ENCODE measurements at regions of chr15 and their contacts with region 1.

Region 1: GRCh38 chr15:42650208-42651066 is 75.0 kb downstream of the STARD9 start:
- DNase-seq: peak; percentile 28 to 71 (median 40)
- ATAC-seq: peak; percentile 84
- H3K4me3 ChIP-seq: no peak overlapping the region
- H3K4me3 Mint-ChIP-seq: no peak overlapping the region
- H3K27ac ChIP-seq: no peak overlapping the region
- H3K27ac Mint-ChIP-seq: no peak overlapping the region
- H3K4me1 ChIP-seq: no peaks in the 10 kb centered on the region
- H3K4me1 Mint-ChIP-seq: no peaks in the 10 kb centered on the region
- H3K27me3 ChIP-seq: no peaks in the 10 kb centered on the region
- H3K27me3 Mint-ChIP-seq: no peaks in the 10 kb centered on the region
- CTCF ChIP-seq: peak; percentile 74

Region 2: GRCh38 chr15:42385206-42385979 is 265.0 kb before region 1 on chr15:
- CTCF ChIA-PET with region 1: no interaction called
- POLR2A ChIA-PET with region 1: no interaction called
- intact Hi-C with region 1: no loop called
- DNase-seq: peak in 2 of 14 experiments; percentile 11 to 19
- ATAC-seq: no peak
- H3K4me3 ChIP-seq: no peak overlapping the region
- H3K4me3 Mint-ChIP-seq: no peak overlapping the region
- H3K27ac ChIP-seq: no peak overlapping the region
- H3K27ac Mint-ChIP-seq: no peak overlapping the region
- H3K4me1 ChIP-seq: no peaks in the 10 kb centered on the region
- H3K4me1 Mint-ChIP-seq: no peaks in the 10 kb centered on the region
- H3K27me3 ChIP-seq: no peaks in the 10 kb centered on the region
- H3K27me3 Mint-ChIP-seq: no peaks in the 10 kb centered on the region
- CTCF ChIP-seq: no peak

Region 3: GRCh38 chr15:42528970-42529369 is 121.5 kb before region 1 on chr15:
- CTCF ChIA-PET with region 1: no interaction called
- POLR2A ChIA-PET with region 1: no interaction called
- intact Hi-C with region 1: loop called in 1 of 2 experiments (anchors 10 kb)
- DNase-seq: no peak
- ATAC-seq: no peak
- H3K4me3 ChIP-seq: no peak overlapping the region
- H3K4me3 Mint-ChIP-seq: no peak overlapping the region
- H3K27ac ChIP-seq: no peak overlapping the region
- H3K27ac Mint-ChIP-seq: no peak overlapping the region
- H3K4me1 ChIP-seq: no peaks in the 10 kb centered on the region
- H3K4me1 Mint-ChIP-seq: no peaks in the 10 kb centered on the region
- H3K27me3 ChIP-seq: no peaks in the 10 kb centered on the region
- H3K27me3 Mint-ChIP-seq: no peaks in the 10 kb centered on the region
- CTCF ChIP-seq: no peak

Region 4: GRCh38 chr15:42608110-42608531 is 42.3 kb before region 1 on chr15:
- CTCF ChIA-PET with region 1: no interaction called
- POLR2A ChIA-PET with region 1: no interaction called
- intact Hi-C with region 1: no loop called
- DNase-seq: peak in 13 of 14 experiments; percentile 1 to 64 (median 9)
- ATAC-seq: peak; percentile 43
- H3K4me3 ChIP-seq: no peak overlapping the region
- H3K4me3 Mint-ChIP-seq: peak overlapping the region; percentile 74
- H3K27ac ChIP-seq: no peak overlapping the region
- H3K27ac Mint-ChIP-seq: peak overlapping the region; percentile 25
- H3K4me1 ChIP-seq: peaks cover 37% of the 10 kb centered on the region
- H3K4me1 Mint-ChIP-seq: peaks cover 49% of the 10 kb centered on the region
- H3K27me3 ChIP-seq: no peaks in the 10 kb centered on the region
- H3K27me3 Mint-ChIP-seq: no peaks in the 10 kb centered on the region
- CTCF ChIP-seq: no peak

Region 5: DNA sequence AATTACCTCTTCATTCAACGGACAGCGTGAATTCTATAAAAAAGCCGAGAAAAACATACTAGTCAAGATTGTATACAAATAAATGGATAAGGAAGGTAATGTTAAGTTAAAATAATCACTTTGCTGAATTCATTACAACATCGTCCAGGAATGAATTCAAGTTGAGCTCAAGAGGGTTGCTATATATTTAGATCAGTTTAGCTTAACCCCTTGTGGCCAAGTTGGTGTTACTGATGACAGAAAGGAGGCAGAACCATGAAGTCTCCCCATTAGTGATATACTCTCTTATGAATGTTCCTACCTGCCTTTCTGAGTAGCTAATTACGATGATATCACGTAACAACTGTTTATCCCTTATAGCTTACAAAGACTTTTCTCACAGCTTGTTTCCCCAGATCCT is 420.5 kb after region 1 on chr15:
- CTCF ChIA-PET with region 1: no interaction called
- POLR2A ChIA-PET with region 1: no interaction called
- intact Hi-C with region 1: no loop called
- DNase-seq: no peak
- ATAC-seq: no peak
- H3K4me3 ChIP-seq: no peak overlapping the region
- H3K4me3 Mint-ChIP-seq: no peak overlapping the region
- H3K27ac ChIP-seq: no peak overlapping the region
- H3K27ac Mint-ChIP-seq: no peak overlapping the region
- H3K4me1 ChIP-seq: no peaks in the 10 kb centered on the region
- H3K4me1 Mint-ChIP-seq: no peaks in the 10 kb centered on the region
- H3K27me3 ChIP-seq: no peaks in the 10 kb centered on the region
- H3K27me3 Mint-ChIP-seq: no peaks in the 10 kb centered on the region
- CTCF ChIP-seq: no peak